Common myeloid progenitor, CD34-positive (primary cell): ENCODE measurements at regions of chr16 and their contacts with region 1.

Region 1: DNA sequence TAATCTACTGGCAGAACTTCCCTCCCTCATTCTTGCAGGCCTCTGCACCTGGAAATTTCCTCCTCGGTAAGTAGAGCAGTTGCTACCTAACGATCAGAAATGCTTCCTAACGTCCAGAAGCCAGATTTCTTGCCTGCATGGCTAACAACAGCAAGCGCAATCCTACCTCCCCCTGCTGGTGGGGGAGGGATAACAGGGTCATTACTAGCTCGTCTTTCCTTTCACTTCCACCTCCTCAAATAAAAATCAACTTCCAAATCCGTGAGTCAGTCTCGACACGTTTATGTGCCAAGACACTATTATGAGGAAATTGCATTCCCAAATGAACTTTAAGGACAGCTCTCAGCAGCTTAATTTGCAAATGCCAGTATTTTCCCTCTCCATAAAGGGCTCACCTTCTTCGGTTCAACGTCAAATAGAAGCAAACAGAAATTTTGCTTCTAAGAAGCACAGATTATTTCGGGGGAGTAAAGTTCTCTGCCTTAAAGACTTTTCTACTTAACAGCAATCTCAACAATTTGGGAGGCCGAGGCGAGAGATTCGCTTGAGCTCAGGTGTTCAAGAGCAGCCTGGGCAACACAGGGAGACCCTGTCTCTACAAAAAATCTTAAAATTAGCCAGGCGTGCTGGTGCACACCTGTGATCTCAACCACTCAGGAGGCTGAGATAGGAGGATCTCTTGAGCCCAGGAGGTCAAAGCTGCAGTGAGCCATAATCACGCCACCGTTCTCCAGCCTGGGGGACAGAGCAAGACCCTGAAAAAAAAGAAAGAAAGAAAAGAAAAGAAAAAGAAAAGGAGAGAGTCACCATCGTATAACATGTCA is 188.6 kb upstream of the PSMD7 start:
- DNase-seq: peak; percentile 56 to 83 (median 78)
- H3K4me3 ChIP-seq: peak overlapping the region in 6 of 7 experiments; percentile 21 to 77 (median 56)
- H3K27ac ChIP-seq: no peak overlapping the region
- H3K4me1 ChIP-seq: peaks cover 0 to 4% (median 0%) of the 10 kb centered on the region in 4 experiments
- H3K27me3 ChIP-seq: no peaks in the 10 kb centered on the region

Region 2: DNA sequence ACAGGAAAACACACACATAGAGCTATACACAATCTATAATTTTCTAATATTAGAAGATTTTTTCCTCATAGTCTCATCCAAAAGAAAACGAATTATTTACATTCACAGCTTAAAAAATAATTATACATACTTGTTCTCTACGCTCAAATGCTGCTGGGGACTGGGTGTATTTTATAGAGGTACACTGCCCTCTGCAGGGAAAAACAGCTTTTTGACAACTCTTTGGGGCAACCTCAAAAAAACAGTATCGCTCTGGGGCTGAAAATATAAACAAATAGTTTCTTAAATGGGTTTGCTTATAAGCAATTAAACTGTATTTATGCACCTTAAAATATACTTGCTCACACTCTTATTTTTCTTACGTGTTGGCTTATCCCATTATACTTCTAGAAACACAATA is 73.1 kb before region 1 on chr16:
- CTCF ChIA-PET with region 1: interaction called, 24 read pairs
- POLR2A ChIA-PET with region 1: no interaction called
- DNase-seq: peak; percentile 22 to 50 (median 48)
- H3K4me3 ChIP-seq: no peak overlapping the region
- H3K27ac ChIP-seq: no peak overlapping the region
- H3K4me1 ChIP-seq: peaks cover 0 to 3% (median 1%) of the 10 kb centered on the region in 4 experiments
- H3K27me3 ChIP-seq: no peaks in the 10 kb centered on the region

Region 3: GRCh38 chr16:74064120-74064735 is 43.8 kb before region 1 on chr16:
- CTCF ChIA-PET with region 1: interaction called, 12 read pairs
- POLR2A ChIA-PET with region 1: no interaction called
- DNase-seq: no peak
- H3K4me3 ChIP-seq: no peak overlapping the region
- H3K27ac ChIP-seq: no peak overlapping the region
- H3K4me1 ChIP-seq: no peaks in the 10 kb centered on the region
- H3K27me3 ChIP-seq: no peaks in the 10 kb centered on the region